ENCODE measurements at regions of chr4 and their contacts with region 1.

Region 1: GRCh38 chr4:142549726-142550463 is 296.2 kb downstream of the INPP4B start:
- DNase-seq: no peak
- ATAC-seq: peak; percentile 83
- H3K4me3 Mint-ChIP-seq: no peak overlapping the region
- H3K27ac Mint-ChIP-seq: peak overlapping the region; percentile 86
- H3K4me1 Mint-ChIP-seq: peaks cover 66% of the 10 kb centered on the region
- H3K27me3 Mint-ChIP-seq: no peaks in the 10 kb centered on the region

Region 2: DNA sequence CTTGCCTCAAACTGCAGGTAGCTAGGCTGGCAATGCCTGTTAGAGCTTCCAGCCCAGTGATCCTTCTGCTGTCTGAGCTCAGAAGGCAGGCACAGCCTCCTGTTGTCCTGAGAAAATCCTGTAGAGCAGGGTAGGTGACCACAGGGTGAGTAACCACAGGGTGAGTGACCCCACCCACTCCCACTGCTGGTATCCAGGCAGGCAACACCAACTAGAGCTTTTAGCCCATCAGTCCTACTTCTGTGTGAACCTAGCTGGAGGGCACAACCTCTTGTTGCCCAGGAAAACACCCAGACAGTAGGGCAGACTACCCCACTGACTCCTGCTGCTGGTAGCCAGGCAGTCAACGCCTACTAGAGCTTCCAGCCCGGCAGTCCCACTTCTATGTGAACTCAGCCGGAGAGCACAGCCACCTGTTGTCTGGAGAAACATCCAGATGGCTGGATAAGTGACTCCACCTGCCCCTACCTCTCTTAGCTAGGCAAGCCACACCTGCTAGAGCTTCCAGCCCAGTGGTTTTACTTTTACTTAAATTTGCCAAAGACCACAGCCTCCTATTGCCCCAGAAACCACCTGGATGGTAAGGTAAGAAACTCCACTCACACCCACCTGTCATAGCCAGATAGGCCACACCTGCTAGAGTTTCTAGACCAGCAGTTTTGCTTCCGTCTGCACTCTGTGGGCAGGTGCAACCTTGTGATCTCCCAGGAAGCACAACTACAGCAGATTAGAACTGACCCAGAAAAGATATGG is 75.4 kb before region 1 on chr4:
- CTCF ChIA-PET with region 1: no interaction called
- POLR2A ChIA-PET with region 1: no interaction called
- intact Hi-C with region 1: no loop called
- DNase-seq: no peak
- ATAC-seq: no peak
- H3K4me3 Mint-ChIP-seq: no peak overlapping the region
- H3K27ac Mint-ChIP-seq: no peak overlapping the region
- H3K4me1 Mint-ChIP-seq: peaks cover 29% of the 10 kb centered on the region
- H3K27me3 Mint-ChIP-seq: no peaks in the 10 kb centered on the region

Region 3: DNA sequence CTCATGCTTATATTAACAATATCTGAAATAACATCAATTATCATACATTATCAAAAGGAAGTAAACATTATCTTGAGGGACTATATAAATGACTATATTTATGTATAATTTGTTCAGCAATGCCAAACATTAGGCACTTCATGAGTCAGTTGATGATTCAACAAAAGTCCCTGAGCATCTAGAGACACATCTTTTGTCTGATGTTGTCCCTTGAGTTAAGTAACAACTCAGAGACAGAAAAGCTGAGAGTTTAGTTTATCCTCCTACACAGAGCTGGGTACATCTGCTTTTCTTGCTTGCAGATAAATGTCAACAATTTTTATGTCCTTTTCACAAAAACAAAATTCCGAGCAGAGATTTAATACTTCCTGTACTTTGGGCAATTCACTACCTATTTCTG is 14.9 kb before region 1 on chr4:
- CTCF ChIA-PET with region 1: interaction called, 3 read pairs
- POLR2A ChIA-PET with region 1: no interaction called
- intact Hi-C with region 1: loop called in 1 of 2 experiments (anchors 1 kb)
- DNase-seq: no peak
- ATAC-seq: peak; percentile 89
- H3K4me3 Mint-ChIP-seq: no peak overlapping the region
- H3K27ac Mint-ChIP-seq: peak overlapping the region; percentile 58
- H3K4me1 Mint-ChIP-seq: peaks cover 37% of the 10 kb centered on the region
- H3K27me3 Mint-ChIP-seq: no peaks in the 10 kb centered on the region

Region 4: DNA sequence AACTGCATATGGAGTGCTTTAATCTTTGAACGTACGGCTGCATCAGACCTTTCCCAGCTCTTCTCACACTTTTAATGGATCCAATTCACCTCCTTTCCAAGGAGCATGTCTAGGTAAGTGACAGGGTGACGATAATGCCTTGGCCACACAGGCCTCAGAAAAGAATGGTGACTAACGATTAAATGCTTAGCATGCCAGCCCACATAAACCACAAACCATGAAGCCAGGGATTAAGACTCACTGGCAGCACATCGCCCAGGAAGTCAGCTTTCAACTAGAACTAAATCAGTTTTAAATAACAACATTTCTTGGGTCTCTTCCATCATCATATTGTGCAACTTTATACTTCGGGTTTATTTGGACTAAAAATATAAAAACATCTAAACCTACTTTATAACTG is 267.5 kb after region 1 on chr4:
- CTCF ChIA-PET with region 1: no interaction called
- POLR2A ChIA-PET with region 1: no interaction called
- intact Hi-C with region 1: loop called in 1 of 2 experiments (anchors 5 kb)
- DNase-seq: peak; percentile 77
- ATAC-seq: peak; percentile 88
- H3K4me3 Mint-ChIP-seq: peak overlapping the region; percentile 18
- H3K27ac Mint-ChIP-seq: peak overlapping the region; percentile 82
- H3K4me1 Mint-ChIP-seq: peaks cover 32% of the 10 kb centered on the region
- H3K27me3 Mint-ChIP-seq: no peaks in the 10 kb centered on the region